CD4-positive, alpha-beta memory T cell (primary cell): ENCODE measurements at regions of chr3 and their contacts with region 1.

Region 1: GRCh38 chr3:123642182-123642956 is 57.5 kb upstream of the HACD2 start:
- DNase-seq: peak in 4 of 5 donors; percentile 3 to 26 (median 16)
- H3K4me3 ChIP-seq: no peak overlapping the region
- H3K4me3 Mint-ChIP-seq: no peak overlapping the region
- H3K27ac ChIP-seq: no peak overlapping the region
- H3K27ac Mint-ChIP-seq: no peak overlapping the region
- H3K4me1 ChIP-seq: no peaks in the 10 kb centered on the region
- H3K4me1 Mint-ChIP-seq: no peaks in the 10 kb centered on the region
- H3K27me3 ChIP-seq: no peaks in the 10 kb centered on the region
- H3K27me3 Mint-ChIP-seq: peaks cover 0 to 4% of the 10 kb centered on the region in 2 donors

Region 2: GRCh38 chr3:123618768-123619484 is 23.4 kb before region 1 on chr3:
- CTCF ChIA-PET with region 1: no interaction called
- POLR2A ChIA-PET with region 1: no interaction called
- intact Hi-C with region 1: no loop called
- DNase-seq: no peak
- H3K4me3 ChIP-seq: no peak overlapping the region
- H3K4me3 Mint-ChIP-seq: no peak overlapping the region
- H3K27ac ChIP-seq: no peak overlapping the region
- H3K27ac Mint-ChIP-seq: no peak overlapping the region
- H3K4me1 ChIP-seq: no peaks in the 10 kb centered on the region
- H3K4me1 Mint-ChIP-seq: no peaks in the 10 kb centered on the region
- H3K27me3 ChIP-seq: no peaks in the 10 kb centered on the region
- H3K27me3 Mint-ChIP-seq: no peaks in the 10 kb centered on the region

Region 3: GRCh38 chr3:123652346-123652984 is 10.1 kb after region 1 on chr3:
- CTCF ChIA-PET with region 1: interaction called, 15 read pairs
- POLR2A ChIA-PET with region 1: no interaction called
- intact Hi-C with region 1: no loop called
- DNase-seq: no peak
- H3K4me3 ChIP-seq: no peak overlapping the region
- H3K4me3 Mint-ChIP-seq: no peak overlapping the region
- H3K27ac ChIP-seq: no peak overlapping the region
- H3K27ac Mint-ChIP-seq: no peak overlapping the region
- H3K4me1 ChIP-seq: no peaks in the 10 kb centered on the region
- H3K4me1 Mint-ChIP-seq: no peaks in the 10 kb centered on the region
- H3K27me3 ChIP-seq: no peaks in the 10 kb centered on the region
- H3K27me3 Mint-ChIP-seq: peaks cover 1% of the 10 kb centered on the region in 2 donors

Region 4: DNA sequence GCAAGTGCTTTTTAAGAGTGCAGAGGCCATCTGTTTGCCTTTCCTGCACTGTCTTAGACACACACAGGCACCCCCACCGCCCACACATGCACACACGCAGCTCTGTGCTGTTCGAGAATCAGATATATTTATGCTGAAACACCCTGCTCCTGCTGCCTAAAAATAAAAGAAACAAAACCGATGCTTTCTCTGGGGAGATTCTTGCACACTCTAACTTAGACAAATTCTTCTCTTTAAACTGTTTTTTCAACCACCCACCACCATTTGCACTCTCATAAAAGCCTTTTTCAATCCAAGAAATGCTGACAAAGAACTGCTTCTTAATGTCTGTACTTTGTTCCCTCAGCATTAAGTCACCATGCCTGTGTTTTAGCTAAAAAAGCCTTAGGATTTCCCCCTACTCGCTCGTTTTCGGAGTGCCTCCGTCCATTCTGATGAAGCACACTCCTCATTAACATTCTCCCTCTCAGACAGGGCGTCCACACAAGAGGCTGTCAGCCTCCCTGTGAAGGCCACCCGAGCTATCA is 1544.0 kb after region 1 on chr3:
- CTCF ChIA-PET with region 1: no interaction called
- POLR2A ChIA-PET with region 1: no interaction called
- intact Hi-C with region 1: no loop called
- DNase-seq: no peak
- H3K4me3 ChIP-seq: no peak overlapping the region
- H3K4me3 Mint-ChIP-seq: no peak overlapping the region
- H3K27ac ChIP-seq: no peak overlapping the region
- H3K27ac Mint-ChIP-seq: peak overlapping the region in 1 of 7 donors; percentile 9
- H3K4me1 ChIP-seq: no peaks in the 10 kb centered on the region
- H3K4me1 Mint-ChIP-seq: no peaks in the 10 kb centered on the region
- H3K27me3 ChIP-seq: no peaks in the 10 kb centered on the region
- H3K27me3 Mint-ChIP-seq: no peaks in the 10 kb centered on the region